BJ (cell line): ENCODE measurements at regions of chr6 and their contacts with region 1.

Region 1: GRCh38 chr6:101226626-101227165 is 166.8 kb upstream of the GRIK2 start:
- DNase-seq: peak; percentile 1
- H3K4me3 ChIP-seq: no peak overlapping the region
- H3K27me3 ChIP-seq: no peaks in the 10 kb centered on the region
- CTCF ChIP-seq: peak; percentile 51

Region 2: DNA sequence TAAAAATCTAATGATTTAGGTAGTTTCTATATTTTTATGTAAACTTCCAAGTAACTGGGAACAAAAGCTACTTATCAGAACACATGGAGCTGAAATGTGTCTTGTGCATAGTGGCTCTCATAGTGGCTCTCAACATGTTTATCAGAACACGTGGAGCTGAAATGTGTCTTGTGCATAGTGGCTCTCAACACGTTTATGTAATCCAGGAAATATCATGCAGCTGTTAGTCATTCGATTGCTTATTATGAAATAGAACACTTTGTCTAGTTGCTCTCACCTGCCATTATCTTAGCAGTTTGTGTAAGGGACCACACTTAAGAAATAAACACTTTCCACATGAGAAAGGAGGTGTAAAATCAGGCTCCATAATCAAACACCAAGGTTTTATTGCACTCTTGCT is 226.4 kb before region 1 on chr6:
- CTCF ChIA-PET with region 1: no interaction called
- POLR2A ChIA-PET with region 1: no interaction called
- DNase-seq: no peak
- H3K4me3 ChIP-seq: no peak overlapping the region
- H3K27me3 ChIP-seq: no peaks in the 10 kb centered on the region
- CTCF ChIP-seq: no peak

Region 3: DNA sequence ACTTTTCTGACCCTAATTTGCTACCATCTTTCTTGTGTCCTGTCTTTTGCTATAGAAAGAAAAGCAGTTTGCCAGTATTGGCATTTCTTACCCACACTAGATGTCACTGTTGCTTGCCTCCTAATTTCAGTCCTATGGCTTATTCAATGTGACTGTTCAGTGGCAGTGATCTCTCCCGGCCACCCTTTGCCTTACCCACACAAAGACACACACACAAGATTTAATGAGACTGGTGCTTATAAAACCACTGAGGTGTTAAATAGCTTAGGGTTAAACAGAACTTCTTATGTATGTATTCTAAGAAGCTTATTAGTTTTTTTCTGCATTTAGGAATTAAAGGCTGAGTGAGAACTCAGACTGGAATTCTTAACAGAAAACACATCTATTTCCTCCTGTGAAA is 112.0 kb before region 1 on chr6:
- CTCF ChIA-PET with region 1: interaction called, 25 read pairs
- POLR2A ChIA-PET with region 1: no interaction called
- DNase-seq: no peak
- H3K4me3 ChIP-seq: no peak overlapping the region
- H3K27me3 ChIP-seq: no peaks in the 10 kb centered on the region
- CTCF ChIP-seq: peak; percentile 66